ENCODE measurements at regions of chrX and their contacts with region 1.

Region 1: GRCh38 chrX:56978172-56978571 is 17.2 kb downstream of the SPIN3 start:
- DNase-seq: peak; percentile 52
- H3K4me3 ChIP-seq: no peak overlapping the region
- H3K27ac ChIP-seq: no peak overlapping the region
- H3K4me1 ChIP-seq: no peaks in the 10 kb centered on the region
- CTCF ChIP-seq: peak; percentile 73

Region 2: GRCh38 chrX:56804867-56805395 is 173.2 kb before region 1 on chrX:
- CTCF ChIA-PET with region 1: no interaction called
- POLR2A ChIA-PET with region 1: no interaction called
- intact Hi-C with region 1: loop called (anchors 5 kb)
- DNase-seq: no peak
- H3K4me3 ChIP-seq: no peak overlapping the region
- H3K27ac ChIP-seq: no peak overlapping the region
- H3K4me1 ChIP-seq: peaks cover 15% of the 10 kb centered on the region
- CTCF ChIP-seq: no peak

Region 3: DNA sequence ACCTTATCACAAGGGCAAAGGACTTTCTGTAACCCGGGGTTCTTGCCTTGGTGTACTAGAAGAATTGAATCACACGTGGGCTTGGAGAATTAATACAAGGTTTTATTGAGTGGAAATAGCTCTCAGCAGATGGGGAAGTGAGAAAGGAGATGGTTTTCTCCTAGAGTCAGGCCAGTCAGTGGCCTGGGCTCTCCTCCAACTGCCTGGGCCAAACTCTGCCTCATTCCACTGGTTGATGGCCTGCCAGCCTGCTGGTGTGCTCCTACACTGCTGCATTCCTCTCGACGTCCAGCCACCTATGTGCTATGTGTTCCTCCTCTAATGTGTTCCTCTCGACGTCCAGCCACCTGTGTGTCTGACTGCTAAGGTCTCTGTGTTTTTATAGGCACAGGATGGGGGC is 194.4 kb after region 1 on chrX:
- CTCF ChIA-PET with region 1: no interaction called
- POLR2A ChIA-PET with region 1: no interaction called
- intact Hi-C with region 1: no loop called
- DNase-seq: no peak
- H3K4me3 ChIP-seq: no peak overlapping the region
- H3K27ac ChIP-seq: no peak overlapping the region
- H3K4me1 ChIP-seq: peaks cover under 1% of the 10 kb centered on the region
- CTCF ChIP-seq: no peak